Posterior vena cava (tissue), 2 donors: ENCODE measurements at regions of chr5 and their contacts with region 1.

Region 1: GRCh38 chr5:13898566-13898965 is 45.9 kb downstream of the DNAH5 start:
- DNase-seq: no peak

Region 2: DNA sequence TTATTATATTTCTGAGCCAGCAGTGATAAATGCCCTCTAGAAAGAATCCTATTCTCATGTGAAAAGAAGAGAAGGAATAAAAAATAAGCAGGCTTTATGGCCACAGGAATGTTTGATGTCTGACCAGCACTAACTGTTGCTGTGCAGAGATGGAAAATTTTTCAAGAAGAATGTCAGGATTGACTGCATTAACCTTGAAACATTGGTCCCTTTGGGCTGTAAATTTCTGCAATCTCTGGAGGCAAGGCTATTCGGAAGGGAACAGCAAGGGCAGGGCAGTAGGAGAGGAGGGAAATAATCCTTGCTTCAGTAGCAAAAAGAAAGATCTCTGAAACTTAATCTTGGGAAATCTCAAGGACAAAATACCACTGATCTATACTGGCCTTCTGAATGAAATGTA is 369.3 kb before region 1 on chr5:
- intact Hi-C with region 1: no loop called
- DNase-seq: no peak

Region 3: GRCh38 chr5:13804336-13804735 is 94.2 kb before region 1 on chr5:
- intact Hi-C with region 1: no loop called
- DNase-seq: no peak

Region 4: GRCh38 chr5:13866792-13867191 is 31.8 kb before region 1 on chr5:
- intact Hi-C with region 1: loop called in 1 of 2 experiments (anchors 1 kb)
- DNase-seq: no peak

Region 5: DNA sequence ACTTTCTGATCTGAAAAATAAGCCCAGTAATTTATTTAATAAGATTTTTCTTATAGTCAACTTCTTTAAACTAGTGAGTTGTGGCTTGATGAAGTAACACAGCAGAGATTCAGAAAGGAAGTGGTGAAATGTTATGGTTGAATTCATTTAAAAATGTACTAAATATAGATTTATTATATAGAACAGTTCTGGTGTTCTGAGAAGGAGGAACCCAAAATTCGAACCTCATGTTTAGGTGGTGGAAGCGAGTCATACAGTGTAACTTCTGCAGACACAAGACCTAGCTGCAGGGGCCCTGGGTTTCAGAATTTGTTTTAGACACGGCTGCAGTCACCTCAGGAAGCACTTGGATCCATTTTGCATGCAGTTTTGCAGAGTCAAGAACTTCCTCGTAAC is 432.8 kb after region 1 on chr5:
- intact Hi-C with region 1: no loop called
- DNase-seq: no peak